Tibial artery (tissue), 4 donors: ENCODE measurements at regions of chr2 and their contacts with region 1.

Region 1: GRCh38 chr2:128027801-128028667 is at the start of gene SAP130:
- DNase-seq: peak; percentile 99
- H3K4me3 ChIP-seq: peak within 1 kb of the TSS; percentile 80 to 99
- H3K27ac ChIP-seq: peak within 1 kb of the TSS; percentile 91 to 98
- H3K4me1 ChIP-seq: peaks cover 0 to 17% (median 7%) of the 10 kb centered on the region in 4 donors
- H3K27me3 ChIP-seq: no peaks in the 10 kb centered on the region
- CTCF ChIP-seq: no peak

Region 2: GRCh38 chr2:127695491-127696472 is 332.3 kb before region 1 on chr2:
- intact Hi-C with region 1: loop called (anchors 10 kb)
- DNase-seq: peak; percentile 71 to 89
- H3K4me3 ChIP-seq: peak overlapping the region; percentile 41 to 44
- H3K27ac ChIP-seq: peak overlapping the region; percentile 62 to 87
- H3K4me1 ChIP-seq: peaks cover 0 to 24% (median 8%) of the 10 kb centered on the region in 4 donors
- H3K27me3 ChIP-seq: no peaks in the 10 kb centered on the region
- CTCF ChIP-seq: peak; percentile 51 to 54

Region 3: GRCh38 chr2:127857265-127857808 is 170.7 kb before region 1 on chr2:
- intact Hi-C with region 1: loop called (anchors 10 kb)
- DNase-seq: peak in 1 of 2 donors; percentile 33
- H3K4me3 ChIP-seq: peak overlapping the region; percentile 79 to 98
- H3K27ac ChIP-seq: peak overlapping the region; percentile 80 to 88
- H3K4me1 ChIP-seq: peaks cover 3 to 36% (median 25%) of the 10 kb centered on the region in 4 donors
- H3K27me3 ChIP-seq: no peaks in the 10 kb centered on the region
- CTCF ChIP-seq: no peak

Region 4: GRCh38 chr2:128090945-128091725 is 63.1 kb after region 1 on chr2 and contains the start of gene UGGT1:
- intact Hi-C with region 1: loop called (anchors 5 kb)
- DNase-seq: peak; percentile 94 to 96
- H3K4me3 ChIP-seq: peak within 1 kb of the TSS; percentile 76 to 83
- H3K27ac ChIP-seq: peak within 1 kb of the TSS; percentile 73 to 79
- H3K4me1 ChIP-seq: peaks cover 0 to 21% (median 13%) of the 10 kb centered on the region in 4 donors
- H3K27me3 ChIP-seq: no peaks in the 10 kb centered on the region
- CTCF ChIP-seq: no peak